ENCODE measurements at regions of chr2 and their contacts with region 1.

Region 1: DNA sequence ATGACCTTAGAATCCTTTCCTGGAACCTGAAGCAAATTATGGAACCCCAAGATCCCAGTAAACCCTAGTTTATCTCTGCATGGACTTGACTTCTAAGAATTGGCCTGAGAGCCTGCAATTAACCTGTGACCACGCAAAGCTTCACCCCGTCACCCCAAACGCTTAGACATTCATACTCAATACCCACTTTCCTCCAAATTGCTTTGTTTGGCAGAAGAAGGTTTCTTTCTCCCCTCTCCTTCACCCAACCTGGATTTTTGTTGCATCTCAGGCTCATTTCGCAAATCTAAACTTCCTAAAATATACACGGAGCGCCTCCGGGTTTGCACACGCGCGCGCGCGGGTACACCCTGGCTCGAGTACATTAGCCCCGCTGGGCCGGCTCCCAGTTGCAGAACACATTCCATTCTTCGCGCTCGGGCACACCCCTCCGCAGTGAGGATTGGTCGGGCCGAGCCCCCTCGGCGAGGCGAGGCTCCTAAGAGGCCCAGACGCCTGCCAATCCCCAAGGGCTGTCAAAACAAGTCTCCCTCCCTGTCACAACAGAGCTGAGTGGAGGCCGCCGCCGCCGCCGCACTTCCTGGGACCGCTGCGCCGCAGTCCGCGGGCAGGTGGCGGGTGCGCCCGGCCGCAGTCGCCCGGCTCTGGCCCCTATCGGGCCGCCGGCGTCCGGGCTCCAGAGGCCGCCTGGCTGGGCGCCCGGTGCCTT is at the start of gene PLCL1:
- DNase-seq: peak; percentile 94
- H3K4me3 ChIP-seq: peak within 1 kb of the TSS; percentile 42 to 78 (median 47)
- H3K27ac ChIP-seq: peak within 1 kb of the TSS; percentile 47
- H3K4me1 ChIP-seq: peaks cover 14% of the 10 kb centered on the region
- H3K27me3 ChIP-seq: no peaks in the 10 kb centered on the region
- CTCF ChIP-seq: no peak
- POLR2A ChIP-seq: no peak
- total RNA-seq, gene PLCL1: 3.4 and 5.1 TPM in 2 replicates

Region 2: DNA sequence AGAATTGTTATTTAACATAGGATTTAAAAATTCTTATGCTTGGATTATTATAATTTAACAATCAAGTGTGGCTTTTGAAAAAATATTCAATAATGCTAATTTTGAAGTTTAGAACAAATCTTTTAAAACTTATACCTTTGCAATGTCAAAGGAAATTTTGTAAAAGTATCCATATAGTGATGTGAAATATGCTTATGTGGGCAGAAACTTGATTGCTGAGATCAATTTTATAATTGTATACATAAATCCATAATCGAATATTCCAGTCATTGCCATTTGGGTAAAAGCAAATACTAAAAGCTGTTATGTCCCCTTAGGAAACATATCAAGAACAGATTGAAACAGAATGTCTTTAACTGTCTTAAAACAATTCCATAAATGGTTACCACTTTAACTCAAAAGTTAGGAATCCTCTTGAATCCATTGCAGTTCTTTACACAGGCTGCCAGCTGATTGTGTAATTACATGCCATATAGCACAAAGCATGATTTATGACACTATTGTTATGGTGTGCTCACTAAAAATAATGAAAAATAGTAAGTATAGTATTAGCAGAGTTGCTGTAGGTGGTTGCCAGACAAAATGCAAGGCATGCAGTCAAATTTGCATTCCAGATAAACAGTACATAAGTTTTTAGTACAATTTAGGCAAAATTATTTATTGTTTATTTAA is 24.4 kb after region 1 on chr2:
- CTCF ChIA-PET with region 1: interaction called, 12 read pairs
- POLR2A ChIA-PET with region 1: no interaction called
- dilution Hi-C with region 1: no loop called
- intact Hi-C with region 1: loop called (anchors 1 kb)
- DNase-seq: peak; percentile 91
- H3K4me3 ChIP-seq: no peak overlapping the region
- H3K27ac ChIP-seq: no peak overlapping the region
- H3K4me1 ChIP-seq: peaks cover 28% of the 10 kb centered on the region
- H3K27me3 ChIP-seq: no peaks in the 10 kb centered on the region
- CTCF ChIP-seq: no peak
- POLR2A ChIP-seq: no peak

Region 3: DNA sequence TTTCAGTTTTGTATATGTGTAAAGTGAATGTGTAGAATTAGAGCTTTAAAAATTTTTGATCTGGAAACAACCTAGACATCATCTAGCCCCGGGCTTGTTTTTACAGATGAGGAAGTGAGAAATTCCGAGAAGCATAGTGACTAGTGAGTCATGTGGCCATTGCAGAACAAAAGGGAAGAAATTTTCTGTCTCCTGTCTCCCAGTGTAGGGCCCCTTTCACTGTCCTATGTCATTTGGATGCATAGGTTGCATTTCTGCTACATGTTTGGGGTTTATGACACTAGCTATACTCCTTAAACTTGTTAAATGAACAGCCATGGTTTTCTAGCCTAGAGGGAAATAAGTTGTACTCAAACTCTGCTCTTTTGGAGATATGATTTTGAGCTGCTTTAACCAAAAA is 84.8 kb after region 1 on chr2:
- CTCF ChIA-PET with region 1: no interaction called
- POLR2A ChIA-PET with region 1: no interaction called
- dilution Hi-C with region 1: no loop called
- intact Hi-C with region 1: loop called (anchors 1 kb)
- DNase-seq: peak; percentile 77
- H3K4me3 ChIP-seq: no peak overlapping the region
- H3K27ac ChIP-seq: peak overlapping the region; percentile 34
- H3K4me1 ChIP-seq: peaks cover 17% of the 10 kb centered on the region
- H3K27me3 ChIP-seq: no peaks in the 10 kb centered on the region
- CTCF ChIP-seq: no peak
- POLR2A ChIP-seq: no peak

Region 4: DNA sequence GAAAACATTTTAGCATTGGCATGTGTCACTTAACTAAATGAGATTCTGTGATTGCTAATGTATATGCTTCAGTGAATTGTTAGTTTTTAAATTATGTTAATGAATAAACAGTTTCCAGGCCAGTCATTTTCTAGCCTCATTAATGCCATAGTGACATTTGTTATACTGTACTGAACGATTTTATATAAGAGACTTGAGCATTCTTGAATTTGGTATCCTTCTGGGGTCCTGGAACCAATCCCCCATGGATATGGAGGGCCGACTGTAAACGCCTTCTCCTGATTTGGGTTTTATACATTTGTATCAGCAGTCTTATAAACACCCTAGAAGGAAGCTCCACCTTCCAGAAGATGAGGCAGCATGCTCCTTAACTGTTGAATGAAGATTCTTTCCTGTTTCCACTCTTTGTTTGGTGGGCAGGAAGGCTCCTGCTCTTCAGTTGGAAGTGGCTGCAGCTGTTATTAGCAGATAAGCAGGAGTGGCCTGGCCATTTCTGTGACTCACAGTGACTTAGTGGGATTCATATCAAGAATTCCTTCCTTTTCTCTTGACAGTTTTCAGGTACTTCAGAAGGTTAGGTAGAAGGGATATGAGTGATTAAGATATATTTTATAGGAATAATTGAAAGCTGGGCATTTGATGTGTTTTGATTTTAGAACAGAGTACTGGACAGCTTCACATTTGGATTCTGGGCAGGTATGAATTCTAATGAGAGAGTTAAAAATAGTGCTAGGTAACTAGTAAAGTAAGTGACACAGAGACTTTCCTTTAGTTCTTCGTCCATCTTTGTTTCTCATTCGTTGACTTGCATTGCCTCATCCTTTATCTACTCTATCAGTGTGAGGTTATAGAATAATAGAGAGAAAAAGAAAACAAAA is 125.0 kb after region 1 on chr2:
- CTCF ChIA-PET with region 1: no interaction called
- POLR2A ChIA-PET with region 1: no interaction called
- dilution Hi-C with region 1: no loop called
- intact Hi-C with region 1: loop called (anchors 2 kb)
- DNase-seq: peak; percentile 91
- H3K4me3 ChIP-seq: no peak overlapping the region
- H3K27ac ChIP-seq: peak overlapping the region; percentile 52
- H3K4me1 ChIP-seq: peaks cover 21% of the 10 kb centered on the region
- H3K27me3 ChIP-seq: no peaks in the 10 kb centered on the region
- CTCF ChIP-seq: no peak
- POLR2A ChIP-seq: no peak

Region 5: GRCh38 chr2:198053776-198054698 is 249.8 kb after region 1 on chr2:
- CTCF ChIA-PET with region 1: interaction called, 6 read pairs
- POLR2A ChIA-PET with region 1: no interaction called
- dilution Hi-C with region 1: no loop called
- intact Hi-C with region 1: loop called (anchors 1 kb)
- DNase-seq: peak; percentile 43
- H3K4me3 ChIP-seq: no peak overlapping the region
- H3K27ac ChIP-seq: no peak overlapping the region
- H3K4me1 ChIP-seq: peaks cover 4% of the 10 kb centered on the region
- H3K27me3 ChIP-seq: no peaks in the 10 kb centered on the region
- CTCF ChIP-seq: peak; percentile 44 to 60
- POLR2A ChIP-seq: no peak

Region 6: GRCh38 chr2:198127627-198128026 is 323.4 kb after region 1 on chr2:
- CTCF ChIA-PET with region 1: interaction called, 88 read pairs
- POLR2A ChIA-PET with region 1: no interaction called
- dilution Hi-C with region 1: no loop called
- intact Hi-C with region 1: loop called (anchors 1 kb)
- DNase-seq: peak; percentile 73
- H3K4me3 ChIP-seq: no peak overlapping the region
- H3K27ac ChIP-seq: no peak overlapping the region
- H3K4me1 ChIP-seq: no peaks in the 10 kb centered on the region
- H3K27me3 ChIP-seq: no peaks in the 10 kb centered on the region
- CTCF ChIP-seq: peak; percentile 60 to 61
- POLR2A ChIP-seq: no peak

Region 7: GRCh38 chr2:199459286-199460016 is 1655.2 kb after region 1 on chr2:
- CTCF ChIA-PET with region 1: no interaction called
- POLR2A ChIA-PET with region 1: no interaction called
- dilution Hi-C with region 1: no loop called
- intact Hi-C with region 1: loop called (anchors 10 kb)
- DNase-seq: peak; percentile 93
- H3K4me3 ChIP-seq: peak overlapping the region; percentile 28 to 84 (median 57)
- H3K27ac ChIP-seq: no peak overlapping the region
- H3K4me1 ChIP-seq: peaks cover 14% of the 10 kb centered on the region
- H3K27me3 ChIP-seq: peaks cover 58 to 82% of the 10 kb centered on the region in 2 experiments
- CTCF ChIP-seq: no peak
- POLR2A ChIP-seq: peak; percentile 14

Measured in endothelial cell of umbilical vein (primary cell).